PC-9 (cell line): ENCODE measurements at regions of chr17 and their contacts with region 1.

Region 1: DNA sequence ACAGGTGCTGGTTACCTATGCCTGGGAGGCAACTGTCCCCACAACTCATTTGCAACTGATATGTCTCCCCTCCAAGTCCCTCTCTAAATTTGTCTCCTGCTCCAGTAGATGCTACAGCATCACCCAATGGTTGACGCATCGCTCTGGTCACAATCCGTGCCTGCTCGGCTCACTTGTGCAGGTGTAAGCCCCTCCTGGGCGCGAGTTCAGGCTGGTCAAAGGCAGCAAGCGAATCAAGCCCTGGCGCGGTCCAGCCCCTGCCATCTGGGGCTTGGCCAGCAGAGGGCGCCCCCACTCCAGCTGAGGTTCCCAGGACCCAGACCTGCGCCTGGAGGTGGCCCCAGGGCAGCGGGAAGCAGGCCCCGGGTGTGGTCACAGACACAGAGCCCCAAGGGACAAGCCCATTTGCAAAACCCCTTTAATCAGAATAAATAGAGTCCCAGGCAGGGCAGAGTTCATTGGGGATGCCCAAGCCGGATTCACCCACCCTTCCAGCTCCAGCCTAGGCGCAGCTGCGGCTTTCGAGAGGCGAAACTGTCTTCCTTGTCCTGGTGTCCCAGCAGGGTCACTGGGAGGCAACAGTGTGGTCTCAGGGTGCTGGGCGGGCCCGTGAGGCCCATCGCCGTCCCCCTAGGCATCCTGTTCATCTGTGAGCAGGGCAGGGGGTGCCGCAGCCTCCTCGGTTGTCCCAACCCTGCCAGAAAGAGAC is 15.9 kb downstream of the TMC6 start:
- DNase-seq: peak in 1 of 2 experiments; percentile 84
- H3K4me3 ChIP-seq: no peak overlapping the region
- H3K27ac ChIP-seq: no peak overlapping the region
- H3K4me1 ChIP-seq: no peaks in the 10 kb centered on the region
- H3K27me3 ChIP-seq: no peaks in the 10 kb centered on the region
- CTCF ChIP-seq: peak; percentile 92

Region 2: DNA sequence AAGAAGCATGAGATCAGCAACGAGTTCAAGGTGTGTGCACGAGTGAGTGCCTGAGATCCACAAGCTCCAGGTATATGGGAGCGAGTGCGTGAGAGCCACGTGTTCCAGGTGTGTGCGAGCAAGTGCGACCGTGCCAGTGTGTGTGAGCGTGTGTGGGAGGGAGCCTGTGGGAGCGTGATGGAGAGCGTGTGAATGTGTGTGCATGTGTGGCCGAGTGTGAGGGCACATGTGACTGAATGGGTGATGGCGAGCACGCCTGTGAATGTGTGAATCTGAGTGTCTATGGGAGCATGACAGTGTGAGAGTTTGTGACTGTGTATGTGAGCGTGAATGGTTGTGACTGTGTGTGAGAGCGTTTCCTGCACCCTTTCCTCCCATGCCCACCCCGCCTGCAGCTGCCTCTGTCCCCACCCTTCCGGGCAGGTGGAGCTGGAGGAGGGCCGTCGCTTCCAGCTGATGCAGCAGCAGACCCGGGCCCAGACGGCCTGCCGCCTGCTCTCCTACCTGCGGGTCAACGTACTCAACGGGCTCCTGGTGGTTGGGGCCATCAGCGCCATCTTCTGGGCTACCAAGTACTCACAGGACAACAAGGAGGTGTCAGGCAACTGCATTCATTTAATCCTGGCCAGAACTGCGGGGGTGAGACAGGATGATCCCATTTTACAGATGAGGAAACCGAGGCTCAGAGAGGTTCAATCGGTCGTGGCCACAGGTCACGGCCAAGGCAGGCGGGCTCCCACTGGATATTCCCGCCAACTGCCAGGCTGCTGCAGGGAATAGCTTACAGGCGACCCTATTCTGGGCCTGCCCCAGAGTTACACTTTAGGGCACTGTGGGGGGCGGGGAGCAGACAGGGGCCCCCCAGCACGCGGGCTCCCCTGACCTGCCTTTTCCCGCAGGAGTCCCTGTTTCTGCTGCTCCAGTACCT is 21.6 kb after region 1 on chr17:
- CTCF ChIA-PET with region 1: no interaction called
- POLR2A ChIA-PET with region 1: no interaction called
- intact Hi-C with region 1: loop called (anchors 1 kb)
- DNase-seq: peak in 1 of 2 experiments; percentile 49
- H3K4me3 ChIP-seq: no peak overlapping the region
- H3K27ac ChIP-seq: no peak overlapping the region
- H3K4me1 ChIP-seq: peaks cover 8% of the 10 kb centered on the region
- H3K27me3 ChIP-seq: no peaks in the 10 kb centered on the region
- CTCF ChIP-seq: peak; percentile 43; the same call in 1 of the 2 replicates

Region 3: DNA sequence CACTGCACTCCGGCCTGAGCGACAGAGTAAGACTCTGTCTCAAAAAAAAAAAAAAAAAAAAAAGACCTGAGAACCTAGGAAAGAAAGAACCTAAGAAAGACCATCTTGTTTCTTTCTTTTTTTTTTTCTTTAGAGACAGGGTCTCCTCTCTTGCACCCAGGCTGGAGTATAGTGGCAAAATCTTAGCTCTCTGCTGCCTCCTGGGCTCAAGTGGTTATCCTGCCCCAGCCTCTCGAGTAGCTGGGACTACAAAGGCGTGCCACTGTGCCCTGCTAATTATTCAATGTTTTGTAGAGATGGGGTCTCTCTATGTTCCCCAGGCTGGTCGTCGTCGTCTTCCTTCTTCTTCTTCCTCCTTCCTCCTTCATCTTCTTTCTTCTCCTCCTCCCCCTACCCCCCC is 93.6 kb after region 1 on chr17:
- CTCF ChIA-PET with region 1: no interaction called
- POLR2A ChIA-PET with region 1: no interaction called
- intact Hi-C with region 1: no loop called
- DNase-seq: no peak
- H3K4me3 ChIP-seq: no peak overlapping the region
- H3K27ac ChIP-seq: no peak overlapping the region
- H3K4me1 ChIP-seq: no peaks in the 10 kb centered on the region
- H3K27me3 ChIP-seq: no peaks in the 10 kb centered on the region
- CTCF ChIP-seq: no peak